Aorta (tissue), 5 donors: ENCODE measurements at regions of chr19 and their contacts with region 1.

Region 1: DNA sequence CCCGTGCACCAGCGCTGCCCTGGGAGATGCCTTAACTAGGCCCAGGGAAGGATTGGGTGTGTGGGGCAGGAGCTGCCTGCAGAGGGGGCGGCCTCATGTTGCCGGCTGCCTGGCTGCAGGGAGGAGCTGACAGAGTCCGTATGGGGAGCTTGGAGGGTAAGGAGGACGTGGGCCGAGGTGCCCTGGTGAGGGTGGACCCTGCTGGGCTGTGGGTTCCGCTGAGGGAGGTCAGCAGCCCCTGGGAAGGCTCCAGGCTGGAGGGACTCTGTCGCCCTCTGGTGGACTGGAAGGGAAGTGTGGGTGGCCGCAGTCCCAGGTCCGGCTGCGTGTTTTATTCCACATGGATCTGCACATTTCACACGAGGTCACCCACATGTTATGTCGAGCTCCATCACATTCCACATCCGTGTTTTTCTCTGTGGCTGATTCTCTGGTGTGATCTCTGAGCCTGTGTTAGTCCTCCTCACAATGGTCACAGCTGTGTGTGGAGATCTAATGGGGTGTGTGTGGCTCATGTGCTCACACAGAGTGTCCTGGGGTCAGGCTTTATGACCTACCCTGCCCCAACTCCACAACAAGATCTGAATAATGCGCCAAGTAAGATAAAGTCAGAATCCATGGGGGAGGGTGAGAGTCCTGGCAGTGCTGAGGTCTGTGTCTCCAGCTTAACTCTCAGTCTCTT is 1.8 kb upstream of the CEACAM8 start:
- DNase-seq: peak in 1 of 2 donors; percentile 62
- ATAC-seq: peak; percentile 70
- H3K4me3 ChIP-seq: no peak overlapping the region
- H3K27ac ChIP-seq: no peak overlapping the region
- H3K4me1 ChIP-seq: no peaks in the 10 kb centered on the region
- H3K27me3 ChIP-seq: no peaks in the 10 kb centered on the region

Region 2: GRCh38 chr19:42108527-42109389 is 487.8 kb before region 1 on chr19:
- intact Hi-C with region 1: no loop called
- DNase-seq: peak; percentile 90 to 92
- ATAC-seq: peak; percentile 86
- H3K4me3 ChIP-seq: no peak overlapping the region
- H3K27ac ChIP-seq: no peak overlapping the region
- H3K4me1 ChIP-seq: no peaks in the 10 kb centered on the region
- H3K27me3 ChIP-seq: no peaks in the 10 kb centered on the region

Region 3: DNA sequence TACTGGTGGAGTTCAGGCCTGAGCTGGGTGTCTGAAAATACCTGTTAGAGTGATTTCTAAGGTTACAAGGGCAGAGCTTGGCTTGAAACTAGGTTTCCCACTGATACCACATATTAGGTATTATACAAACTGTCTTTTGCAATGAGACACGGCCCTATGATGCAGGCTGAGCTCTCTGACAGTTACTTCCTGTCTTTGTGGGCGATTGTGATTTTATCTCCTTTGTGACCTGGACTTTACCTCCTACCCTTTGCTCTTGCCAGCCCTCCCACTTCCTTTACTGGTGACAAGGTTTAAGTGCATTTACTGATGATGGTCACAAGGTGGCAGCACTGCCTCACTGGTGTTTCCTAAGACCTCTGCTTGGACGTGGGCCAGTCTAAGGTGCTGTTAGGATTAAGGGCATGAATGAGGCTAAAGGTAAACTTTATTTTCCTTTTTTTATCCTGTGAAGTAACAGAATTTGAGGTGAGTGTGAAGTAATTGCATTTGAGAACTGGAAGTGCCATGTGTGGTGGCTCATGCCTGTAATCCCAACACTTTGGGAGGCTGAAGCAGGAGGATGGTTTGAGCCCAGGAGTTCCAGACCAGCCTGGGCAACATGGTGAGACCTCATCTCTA is 146.1 kb before region 1 on chr19:
- intact Hi-C with region 1: loop called in 1 of 2 experiments (anchors 5 kb)
- DNase-seq: peak; percentile 80 to 81
- ATAC-seq: peak; percentile 89
- H3K4me3 ChIP-seq: no peak overlapping the region
- H3K27ac ChIP-seq: no peak overlapping the region
- H3K4me1 ChIP-seq: no peaks in the 10 kb centered on the region
- H3K27me3 ChIP-seq: no peaks in the 10 kb centered on the region

Region 4: DNA sequence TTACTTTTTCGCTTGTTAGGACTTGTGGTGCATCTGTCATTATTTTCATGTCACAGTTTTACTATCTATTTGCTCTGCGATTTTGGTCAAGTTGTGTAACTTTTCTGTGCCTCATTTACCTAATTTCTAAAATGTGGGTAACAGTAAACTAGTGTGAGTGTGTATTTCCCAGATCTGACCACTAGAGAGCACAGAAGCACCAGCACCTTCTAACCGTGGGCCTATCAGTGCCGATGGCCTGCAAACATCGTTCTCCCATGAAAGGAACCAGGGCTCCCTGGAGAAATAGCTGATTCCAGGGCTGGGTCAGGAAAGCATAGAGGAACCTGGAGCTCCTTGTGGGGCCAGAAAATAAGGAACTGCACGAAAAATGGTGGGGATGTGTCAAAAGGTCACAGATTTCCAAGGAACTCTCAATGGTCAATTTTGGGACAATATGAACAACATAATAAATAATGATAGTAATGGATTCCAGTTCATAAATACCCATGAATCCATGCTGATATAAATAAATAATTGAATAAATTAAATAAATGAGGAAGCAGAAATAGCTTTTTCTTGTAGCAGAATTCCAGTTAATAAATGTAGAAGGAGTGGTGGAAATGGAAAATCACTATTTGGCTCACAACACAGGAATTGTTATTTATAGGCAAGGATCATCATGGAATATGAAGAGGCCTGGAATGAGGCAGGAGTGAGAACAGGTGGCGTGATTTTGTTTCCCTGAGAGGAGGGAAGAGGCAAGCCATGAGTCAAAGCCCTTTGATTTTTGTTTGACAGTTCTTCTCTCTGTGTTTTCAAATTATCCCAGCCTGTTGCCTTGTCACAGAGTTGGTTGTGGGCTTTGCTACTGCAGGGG is 33.0 kb before region 1 on chr19:
- intact Hi-C with region 1: loop called in 1 of 2 experiments (anchors 2 kb)
- DNase-seq: no peak
- ATAC-seq: peak; percentile 72
- H3K4me3 ChIP-seq: no peak overlapping the region
- H3K27ac ChIP-seq: peak overlapping the region in 1 of 2 donors; percentile 22
- H3K4me1 ChIP-seq: no peaks in the 10 kb centered on the region
- H3K27me3 ChIP-seq: no peaks in the 10 kb centered on the region

Region 5: DNA sequence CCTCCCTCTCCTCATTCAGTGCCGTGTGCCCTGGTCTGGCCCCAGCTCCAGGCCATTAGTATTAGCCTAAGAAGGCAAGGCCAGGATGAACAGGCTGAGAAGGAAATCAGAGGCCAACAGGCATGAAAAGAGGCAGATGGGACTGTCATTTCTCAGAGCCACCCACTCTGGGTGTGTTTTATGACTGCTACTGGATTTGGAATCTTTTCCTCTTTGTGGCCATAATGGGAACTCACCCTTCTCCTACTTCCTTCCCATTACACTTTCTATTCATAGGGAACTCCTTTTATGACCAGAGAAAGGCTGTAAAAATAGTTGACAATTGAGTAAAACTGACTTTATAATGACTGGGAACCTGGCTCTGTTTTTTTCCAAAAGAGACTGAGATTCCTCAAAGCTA is 19.5 kb before region 1 on chr19:
- intact Hi-C with region 1: no loop called
- DNase-seq: no peak
- ATAC-seq: no peak
- H3K4me3 ChIP-seq: no peak overlapping the region
- H3K27ac ChIP-seq: no peak overlapping the region
- H3K4me1 ChIP-seq: no peaks in the 10 kb centered on the region
- H3K27me3 ChIP-seq: no peaks in the 10 kb centered on the region